Aorta (tissue), 5 donors: ENCODE measurements at regions of chr11 and their contacts with region 1.

Region 1: DNA sequence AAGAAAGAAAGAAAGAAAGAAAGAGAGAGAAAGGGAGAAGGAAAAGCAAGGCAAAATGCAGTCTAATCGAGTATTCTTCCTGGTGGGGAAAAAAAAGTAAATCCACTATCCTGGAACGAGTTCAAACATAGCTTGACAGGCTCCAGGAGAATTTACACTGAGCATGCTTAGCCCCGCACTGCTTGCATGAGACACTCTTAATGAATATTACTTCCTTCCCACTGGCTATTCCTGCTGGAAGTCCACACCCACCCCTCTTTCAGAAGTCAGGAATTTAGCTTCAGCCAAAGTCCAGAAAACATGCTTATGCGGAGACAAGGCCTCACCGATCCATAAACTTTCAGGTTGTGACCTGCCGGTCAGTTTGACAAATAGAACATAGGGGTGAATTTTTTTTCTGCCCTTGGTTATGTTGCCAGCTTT is 251.8 kb upstream of the BLID start:
- DNase-seq: peak in 1 of 2 donors; percentile 54
- ATAC-seq: peak; percentile 78
- H3K4me3 ChIP-seq: no peak overlapping the region
- H3K27ac ChIP-seq: peak overlapping the region; percentile 71 to 82
- H3K4me1 ChIP-seq: peaks cover 3 to 8% of the 10 kb centered on the region in 2 donors
- H3K27me3 ChIP-seq: no peaks in the 10 kb centered on the region

Region 2: GRCh38 chr11:122309262-122309925 is 58.4 kb before region 1 on chr11:
- intact Hi-C with region 1: loop called in 1 of 2 experiments (anchors 5 kb)
- DNase-seq: peak in 1 of 2 donors; percentile 55
- ATAC-seq: no peak
- H3K4me3 ChIP-seq: peak overlapping the region; percentile 44 to 86
- H3K27ac ChIP-seq: peak overlapping the region; percentile 31 to 97
- H3K4me1 ChIP-seq: peaks cover 1 to 11% of the 10 kb centered on the region in 2 donors
- H3K27me3 ChIP-seq: no peaks in the 10 kb centered on the region

Region 3: DNA sequence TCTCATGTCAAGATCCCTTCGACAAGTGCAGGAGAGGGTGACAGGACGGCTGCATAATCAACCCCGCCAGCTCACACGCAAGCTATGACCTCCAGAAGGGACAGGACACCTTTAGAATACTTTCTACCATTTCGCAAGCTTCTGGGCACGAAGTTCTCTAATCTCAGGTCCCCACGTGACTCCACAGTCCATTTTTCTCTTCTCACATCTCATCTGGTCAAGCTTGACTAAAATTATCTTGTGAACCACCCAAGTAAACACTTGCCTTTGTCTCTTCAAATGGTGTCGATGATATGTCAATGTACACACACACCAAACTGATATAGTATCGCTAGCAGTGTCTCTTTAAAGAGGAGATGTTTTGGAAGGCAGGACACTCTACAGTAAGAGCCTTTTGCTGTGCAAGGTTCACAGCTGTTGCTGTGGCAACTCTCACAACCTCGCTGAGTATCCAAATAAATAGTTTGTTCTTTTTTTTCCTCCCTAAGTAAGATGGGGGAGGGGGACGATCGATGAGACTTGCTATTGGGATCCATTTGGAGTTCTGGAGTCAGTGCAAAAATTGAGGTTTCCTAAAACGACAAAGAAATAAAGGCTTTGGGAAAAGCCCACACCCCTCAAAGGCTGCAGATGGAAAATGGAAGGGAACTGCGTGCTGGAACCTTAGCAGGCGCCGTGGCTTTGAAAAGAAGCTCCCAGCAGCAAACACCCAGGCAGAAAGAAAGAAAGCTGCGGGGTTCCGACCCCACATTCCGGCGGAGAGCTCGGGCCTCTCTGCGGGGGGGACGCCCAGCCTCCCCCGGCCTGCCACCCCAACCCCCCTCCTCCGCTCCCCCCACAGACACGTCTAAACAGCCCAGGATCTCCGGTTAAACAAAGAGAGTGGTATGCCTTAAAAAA is 72.3 kb after region 1 on chr11:
- intact Hi-C with region 1: loop called in 1 of 2 experiments (anchors 5 kb)
- DNase-seq: peak in 1 of 2 donors; percentile 72
- ATAC-seq: peak; percentile 57
- H3K4me3 ChIP-seq: peak overlapping the region; percentile 75 to 89
- H3K27ac ChIP-seq: no peak overlapping the region
- H3K4me1 ChIP-seq: peaks cover 0 to 8% of the 10 kb centered on the region in 2 donors
- H3K27me3 ChIP-seq: no peaks in the 10 kb centered on the region

Region 4: GRCh38 chr11:122478986-122479385 is 111.2 kb after region 1 on chr11:
- intact Hi-C with region 1: no loop called
- DNase-seq: no peak
- ATAC-seq: no peak
- H3K4me3 ChIP-seq: no peak overlapping the region
- H3K27ac ChIP-seq: no peak overlapping the region
- H3K4me1 ChIP-seq: peaks cover 0 to 5% of the 10 kb centered on the region in 2 donors
- H3K27me3 ChIP-seq: no peaks in the 10 kb centered on the region

Region 5: DNA sequence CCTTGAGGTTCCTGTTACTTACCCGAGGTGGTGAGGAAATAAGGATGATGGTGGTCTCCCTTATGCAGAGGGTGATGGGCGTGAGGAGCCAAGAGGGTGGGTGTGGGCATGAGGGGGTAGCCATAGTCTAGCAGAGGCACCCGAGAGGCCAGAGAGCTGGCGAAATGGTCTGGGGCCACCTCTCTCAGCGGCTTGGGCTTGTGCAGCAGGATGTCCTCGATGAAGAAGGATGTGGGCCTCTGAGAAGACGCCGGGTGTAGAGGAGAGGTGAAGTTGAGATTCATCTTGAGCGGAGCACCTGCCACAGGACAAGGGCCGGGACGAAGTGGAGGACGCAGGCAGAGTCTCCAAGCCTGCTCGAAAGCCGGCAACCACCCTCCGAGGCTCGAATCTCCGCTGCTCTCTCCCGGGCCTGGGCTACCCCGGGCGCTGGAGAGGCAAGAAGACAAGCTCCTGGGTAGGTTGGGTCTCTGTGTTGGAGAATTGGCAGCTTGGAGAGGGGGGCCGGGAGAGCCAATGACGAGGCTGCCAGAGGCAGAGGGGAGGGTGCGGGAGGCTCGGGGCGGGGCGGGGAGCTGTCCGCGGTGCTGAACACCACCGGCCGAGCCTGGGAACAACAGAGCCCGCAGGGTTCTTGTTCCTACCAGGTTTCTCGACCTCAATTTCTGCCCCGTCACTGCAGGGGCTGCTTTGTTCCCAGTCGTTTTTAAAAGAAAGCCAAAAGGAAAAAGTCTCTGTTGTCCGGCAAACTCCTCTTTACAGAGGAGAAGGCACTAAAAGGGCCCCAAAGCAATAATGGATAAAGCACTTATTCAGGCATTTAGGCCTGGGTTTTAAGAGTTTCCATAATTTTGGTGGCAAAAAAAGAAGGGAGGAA is 613.8 kb after region 1 on chr11 and contains the start of gene BSX:
- intact Hi-C with region 1: no loop called
- DNase-seq: peak in 1 of 2 donors; percentile 85
- ATAC-seq: peak; percentile 26
- H3K4me3 ChIP-seq: no peak within 1 kb of the TSS
- H3K27ac ChIP-seq: no peak within 1 kb of the TSS
- H3K4me1 ChIP-seq: no peaks in the 10 kb centered on the region
- H3K27me3 ChIP-seq: no peaks in the 10 kb centered on the region
- total RNA-seq, gene BSX: not detected